CD8-positive, alpha-beta T cell (primary cell): ENCODE measurements at regions of chr22 and their contacts with region 1.

Region 1: DNA sequence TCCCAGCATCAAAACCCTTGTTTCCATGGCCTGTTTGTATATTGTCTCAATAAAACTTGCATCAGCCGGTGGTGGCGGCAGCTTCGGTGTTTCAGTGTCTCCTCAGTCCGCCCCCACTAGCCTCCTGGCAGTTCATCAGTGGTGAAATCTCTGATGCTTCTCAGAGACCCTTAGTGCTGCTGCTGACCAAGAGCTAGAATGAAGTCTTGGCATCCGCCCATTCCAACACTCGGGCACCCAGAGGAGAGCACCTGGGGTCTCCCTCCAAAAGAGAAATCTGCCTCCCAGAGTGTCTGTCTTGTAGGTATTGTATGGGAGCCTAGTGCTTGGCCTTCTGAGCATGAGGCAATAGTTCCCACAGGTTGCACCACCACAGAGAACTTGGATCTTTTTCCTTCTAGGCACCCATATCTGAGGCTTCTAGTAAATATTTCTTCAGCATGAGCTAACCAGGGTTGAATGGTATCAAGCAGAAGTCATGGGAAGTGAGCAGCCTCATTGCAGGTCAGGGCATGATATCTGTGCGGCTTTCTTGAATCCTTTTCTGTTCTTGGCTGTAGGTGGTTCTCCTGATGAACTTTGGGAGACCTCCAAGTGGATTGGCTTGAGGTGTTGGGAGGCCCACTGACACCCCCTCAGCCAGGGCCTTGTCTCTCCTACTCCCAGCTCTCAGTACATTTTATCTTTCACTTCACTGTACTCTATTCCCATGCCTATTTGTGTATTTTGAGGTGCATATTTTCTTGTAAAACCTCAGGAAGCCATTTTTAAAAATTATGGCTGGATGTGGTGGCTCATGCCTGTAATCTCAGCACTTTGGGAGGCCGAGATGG is 13.2 kb upstream of the AIFM3 start:
- DNase-seq: no peak
- ATAC-seq: no peak
- H3K4me3 ChIP-seq: no peak overlapping the region
- H3K4me3 Mint-ChIP-seq: no peak overlapping the region
- H3K27ac ChIP-seq: no peak overlapping the region
- H3K27ac Mint-ChIP-seq: no peak overlapping the region
- H3K4me1 ChIP-seq: peaks cover 21% of the 10 kb centered on the region
- H3K4me1 Mint-ChIP-seq: peaks cover 13% of the 10 kb centered on the region
- H3K27me3 ChIP-seq: peaks cover 10 to 13% of the 10 kb centered on the region in 2 experiments
- H3K27me3 Mint-ChIP-seq: peaks cover 18% of the 10 kb centered on the region
- CTCF ChIP-seq: no peak

Region 2: GRCh38 chr22:20964090-20964798 is 10.4 kb after region 1 on chr22:
- CTCF ChIA-PET with region 1: interaction called, 27 read pairs
- POLR2A ChIA-PET with region 1: no interaction called
- intact Hi-C with region 1: no loop called
- DNase-seq: no peak
- ATAC-seq: no peak
- H3K4me3 ChIP-seq: peak overlapping the region; percentile 7 to 35
- H3K4me3 Mint-ChIP-seq: peak overlapping the region; percentile 77
- H3K27ac ChIP-seq: no peak overlapping the region
- H3K27ac Mint-ChIP-seq: no peak overlapping the region
- H3K4me1 ChIP-seq: peaks cover 9% of the 10 kb centered on the region
- H3K4me1 Mint-ChIP-seq: peaks cover 8% of the 10 kb centered on the region
- H3K27me3 ChIP-seq: peaks cover 0 to 15% of the 10 kb centered on the region in 2 experiments
- H3K27me3 Mint-ChIP-seq: peaks cover 17% of the 10 kb centered on the region
- CTCF ChIP-seq: no peak